ENCODE measurements at regions of chr2 and their contacts with region 1.

Region 1: GRCh38 chr2:199459286-199460016 is 1.7 kb upstream of the SATB2 start:
- DNase-seq: peak; percentile 94
- H3K4me3 Mint-ChIP-seq: peak overlapping the region; percentile 77
- H3K27ac Mint-ChIP-seq: peak overlapping the region; percentile 84
- H3K4me1 Mint-ChIP-seq: peaks cover 5% of the 10 kb centered on the region
- H3K27me3 Mint-ChIP-seq: no peaks in the 10 kb centered on the region
- CTCF ChIP-seq: no peak

Region 2: DNA sequence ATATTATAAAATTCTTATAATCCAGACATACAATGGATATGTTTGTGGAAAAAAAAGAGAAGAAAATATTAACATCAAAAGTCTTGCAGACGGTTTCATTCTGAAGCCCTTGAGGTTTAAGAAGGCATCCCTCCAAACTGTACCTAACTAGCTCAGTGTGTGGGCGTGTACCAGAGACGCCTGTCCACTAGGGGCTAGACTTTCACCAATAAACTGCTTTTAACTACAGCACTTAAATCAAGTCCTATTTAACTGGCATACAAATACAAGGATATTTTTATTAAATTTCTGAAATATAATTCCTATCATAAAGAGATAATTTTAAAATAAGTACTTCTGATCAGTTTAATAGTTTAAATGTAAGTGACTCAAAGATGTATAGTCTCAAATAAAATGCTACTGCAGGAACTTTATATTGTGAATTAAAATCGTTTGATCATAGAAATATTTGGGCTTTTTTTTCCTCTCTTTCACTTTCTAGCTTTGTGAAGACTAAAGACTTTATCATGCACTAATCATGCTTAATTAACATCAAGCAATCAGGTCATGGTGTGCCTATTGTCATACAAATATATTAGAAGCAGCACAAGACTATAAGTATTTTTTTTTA is 439.4 kb before region 1 on chr2:
- CTCF ChIA-PET with region 1: interaction called, 3 read pairs
- POLR2A ChIA-PET with region 1: no interaction called
- intact Hi-C with region 1: loop called (anchors 1 kb)
- DNase-seq: peak; percentile 46
- H3K4me3 Mint-ChIP-seq: no peak overlapping the region
- H3K27ac Mint-ChIP-seq: no peak overlapping the region
- H3K4me1 Mint-ChIP-seq: no peaks in the 10 kb centered on the region
- H3K27me3 Mint-ChIP-seq: peaks cover 24% of the 10 kb centered on the region
- CTCF ChIP-seq: peak; percentile 32

Region 3: DNA sequence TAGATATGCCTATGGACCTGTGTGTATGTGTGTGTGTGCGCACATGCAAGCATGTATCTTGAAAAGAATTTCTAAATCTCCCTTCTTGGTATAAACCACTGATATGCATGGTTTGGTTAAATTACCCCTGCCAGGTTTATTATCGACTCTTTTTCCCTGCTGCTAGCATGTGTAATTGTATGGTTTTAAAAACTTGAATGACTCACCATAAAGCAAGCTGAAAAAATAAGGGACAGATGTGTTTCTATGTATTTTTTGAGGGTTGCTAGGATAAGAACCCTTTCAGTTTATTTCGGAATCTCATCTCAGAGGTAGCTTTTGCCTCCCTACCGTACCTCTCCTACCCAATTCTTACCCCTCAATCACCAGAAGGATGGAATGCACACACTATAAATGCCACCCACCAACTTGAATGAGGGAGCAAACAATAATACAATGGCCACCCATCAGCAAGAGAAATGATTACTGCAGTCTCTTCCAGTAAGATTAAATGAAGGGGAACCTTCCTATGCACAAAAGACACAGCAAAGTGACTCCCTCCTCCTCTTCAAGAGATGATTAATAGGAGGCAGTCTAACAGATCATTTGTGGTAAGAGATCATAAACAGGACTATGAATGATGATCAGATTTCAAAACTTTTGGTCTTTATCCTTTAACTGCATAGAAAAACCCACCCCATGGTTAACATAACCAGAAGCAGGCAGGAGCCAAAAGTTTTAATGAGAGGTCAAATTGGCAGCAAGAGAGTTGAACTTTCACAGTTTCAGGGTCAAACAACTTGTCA is 358.9 kb before region 1 on chr2:
- CTCF ChIA-PET with region 1: no interaction called
- POLR2A ChIA-PET with region 1: interaction called, 3 read pairs
- intact Hi-C with region 1: loop called (anchors 10 kb)
- DNase-seq: no peak
- H3K4me3 Mint-ChIP-seq: no peak overlapping the region
- H3K27ac Mint-ChIP-seq: no peak overlapping the region
- H3K4me1 Mint-ChIP-seq: no peaks in the 10 kb centered on the region
- H3K27me3 Mint-ChIP-seq: peaks cover 68% of the 10 kb centered on the region
- CTCF ChIP-seq: no peak

Region 4: DNA sequence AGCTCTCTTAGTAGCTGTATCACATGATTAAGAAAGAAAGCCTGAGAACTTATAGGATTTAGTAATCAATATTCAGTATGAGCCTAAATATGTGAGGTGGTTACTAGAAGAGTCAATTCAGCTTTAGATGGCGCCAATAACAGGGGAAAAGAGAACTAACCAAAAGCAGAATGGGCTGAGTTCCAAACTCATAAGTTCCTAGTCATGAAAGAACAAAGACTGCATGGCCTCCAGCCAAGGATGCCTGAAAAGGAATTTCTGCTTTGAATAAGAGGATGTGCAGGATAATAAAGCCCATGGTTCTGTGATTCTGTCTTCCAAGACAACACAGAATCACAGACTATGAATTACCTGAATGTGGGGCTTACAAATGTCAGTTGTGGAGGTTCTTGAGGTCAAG is 198.2 kb before region 1 on chr2:
- CTCF ChIA-PET with region 1: interaction called, 3 read pairs
- POLR2A ChIA-PET with region 1: interaction called, 3 read pairs
- intact Hi-C with region 1: loop called (anchors 1 kb)
- DNase-seq: peak; percentile 77
- H3K4me3 Mint-ChIP-seq: no peak overlapping the region
- H3K27ac Mint-ChIP-seq: no peak overlapping the region
- H3K4me1 Mint-ChIP-seq: no peaks in the 10 kb centered on the region
- H3K27me3 Mint-ChIP-seq: no peaks in the 10 kb centered on the region
- CTCF ChIP-seq: no peak

Region 5: DNA sequence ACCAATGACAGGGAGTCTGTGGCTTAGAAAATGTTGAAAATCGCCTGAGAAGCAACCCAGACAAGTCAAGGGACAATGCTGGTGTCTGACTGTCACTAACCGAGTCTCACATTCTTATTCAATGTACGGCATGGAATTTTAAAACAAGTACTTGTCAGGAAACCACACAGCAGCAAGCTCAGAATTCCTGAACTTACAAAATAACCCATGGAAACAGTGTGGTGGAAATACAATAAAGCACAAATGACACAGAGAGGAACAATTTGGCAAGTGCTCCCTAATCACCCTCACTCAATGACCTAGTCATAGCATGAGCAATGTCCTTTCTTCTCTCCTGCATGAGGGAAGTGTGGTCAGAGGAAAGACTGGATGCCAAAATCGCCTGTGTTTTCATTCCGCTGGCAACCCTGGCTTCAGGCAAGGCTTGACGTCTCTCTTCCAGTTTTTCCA is 155.7 kb before region 1 on chr2:
- CTCF ChIA-PET with region 1: no interaction called
- POLR2A ChIA-PET with region 1: no interaction called
- intact Hi-C with region 1: loop called (anchors 5 kb)
- DNase-seq: peak; percentile 85
- H3K4me3 Mint-ChIP-seq: no peak overlapping the region
- H3K27ac Mint-ChIP-seq: peak overlapping the region; percentile 33
- H3K4me1 Mint-ChIP-seq: peaks cover 12% of the 10 kb centered on the region
- H3K27me3 Mint-ChIP-seq: no peaks in the 10 kb centered on the region
- CTCF ChIP-seq: no peak

Region 6: DNA sequence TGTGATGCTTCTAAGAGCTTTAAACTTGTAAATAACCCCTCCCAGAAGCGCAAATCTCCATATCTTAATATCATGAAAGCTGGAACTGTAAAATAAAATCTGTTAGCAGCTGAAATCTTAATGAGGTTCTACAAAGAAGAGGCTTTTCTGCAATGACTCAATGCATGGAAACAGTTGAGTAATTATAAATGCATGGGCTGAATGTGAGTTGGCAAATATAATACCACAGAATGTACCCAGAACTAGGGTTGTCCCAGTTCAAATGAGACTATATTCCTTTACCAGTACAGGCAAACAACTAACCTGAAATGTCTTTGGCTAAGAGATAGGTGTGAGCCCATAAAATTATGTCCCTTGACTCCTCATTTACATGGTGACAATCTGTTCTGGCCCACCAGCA is 54.6 kb before region 1 on chr2:
- CTCF ChIA-PET with region 1: interaction called, 3 read pairs
- POLR2A ChIA-PET with region 1: no interaction called
- intact Hi-C with region 1: loop called (anchors 5 kb)
- DNase-seq: peak; percentile 18
- H3K4me3 Mint-ChIP-seq: no peak overlapping the region
- H3K27ac Mint-ChIP-seq: peak overlapping the region; percentile 85
- H3K4me1 Mint-ChIP-seq: peaks cover 11% of the 10 kb centered on the region
- H3K27me3 Mint-ChIP-seq: no peaks in the 10 kb centered on the region
- CTCF ChIP-seq: no peak

Measured in MCF 10A (cell line).